ENCODE measurements at regions of chr3 and their contacts with region 1.

Region 1: GRCh38 chr3:15268033-15268631 is 62.1 kb downstream of the CAPN7 start:
- DNase-seq: no peak
- ATAC-seq: peak; percentile 80
- H3K4me3 ChIP-seq: no peak overlapping the region
- H3K27ac ChIP-seq: no peak overlapping the region
- H3K4me1 ChIP-seq: peaks cover 39% of the 10 kb centered on the region
- H3K27me3 ChIP-seq: no peaks in the 10 kb centered on the region
- CTCF ChIP-seq: peak; percentile 95 to 99 (median 97); a peak in 5 of 6 replicates
- EP300 ChIP-seq: no peak
- POLR2A ChIP-seq: no peak
- RAD21 ChIP-seq: peak; percentile 100

Region 2: GRCh38 chr3:15171096-15171495 is 97.0 kb before region 1 on chr3:
- CTCF ChIA-PET with region 1: no interaction called
- POLR2A ChIA-PET with region 1: no interaction called
- RAD21 ChIA-PET with region 1: no interaction called
- SMC1A ChIA-PET with region 1: no interaction called
- in situ Hi-C with region 1: no loop called
- intact Hi-C with region 1: no loop called
- DNase-seq: peak; percentile 40
- ATAC-seq: peak; percentile 97
- H3K4me3 ChIP-seq: no peak overlapping the region
- H3K27ac ChIP-seq: no peak overlapping the region
- H3K4me1 ChIP-seq: peaks cover 3% of the 10 kb centered on the region
- H3K27me3 ChIP-seq: no peaks in the 10 kb centered on the region
- CTCF ChIP-seq: no peak
- EP300 ChIP-seq: no peak; a peak in 1 of 4 replicates
- POLR2A ChIP-seq: no peak
- RAD21 ChIP-seq: no peak

Region 3: DNA sequence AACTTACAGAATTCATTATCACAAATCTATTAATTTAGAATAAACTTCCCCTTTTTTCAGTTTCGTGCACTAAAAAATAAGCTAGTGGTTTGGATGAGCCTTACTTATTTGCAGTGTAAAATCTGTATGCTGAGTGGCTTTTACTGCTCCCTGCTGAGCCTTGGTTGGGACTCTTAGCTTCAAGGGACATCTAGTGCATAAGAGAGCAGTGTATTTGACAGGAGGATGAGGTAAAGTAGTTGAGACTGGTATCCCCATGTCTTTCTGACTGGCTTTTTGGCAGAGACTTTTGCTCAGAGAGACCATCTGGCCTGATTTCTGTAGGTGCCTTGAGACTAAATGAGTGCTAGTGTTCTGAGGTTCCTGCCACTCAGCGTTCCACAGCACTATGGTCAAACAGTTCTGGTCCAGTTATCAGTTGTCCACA is 50.3 kb before region 1 on chr3:
- CTCF ChIA-PET with region 1: interaction called, 11 read pairs
- POLR2A ChIA-PET with region 1: interaction called, 4 read pairs
- RAD21 ChIA-PET with region 1: no interaction called
- SMC1A ChIA-PET with region 1: interaction called, 7 read pairs
- in situ Hi-C with region 1: no loop called
- intact Hi-C with region 1: no loop called
- DNase-seq: no peak
- ATAC-seq: peak; percentile 56
- H3K4me3 ChIP-seq: no peak overlapping the region
- H3K27ac ChIP-seq: no peak overlapping the region
- H3K4me1 ChIP-seq: peaks cover 7% of the 10 kb centered on the region; the same call in 1 of the 2 replicates
- H3K27me3 ChIP-seq: no peaks in the 10 kb centered on the region
- CTCF ChIP-seq: no peak
- EP300 ChIP-seq: no peak
- POLR2A ChIP-seq: no peak
- RAD21 ChIP-seq: no peak

Region 4: DNA sequence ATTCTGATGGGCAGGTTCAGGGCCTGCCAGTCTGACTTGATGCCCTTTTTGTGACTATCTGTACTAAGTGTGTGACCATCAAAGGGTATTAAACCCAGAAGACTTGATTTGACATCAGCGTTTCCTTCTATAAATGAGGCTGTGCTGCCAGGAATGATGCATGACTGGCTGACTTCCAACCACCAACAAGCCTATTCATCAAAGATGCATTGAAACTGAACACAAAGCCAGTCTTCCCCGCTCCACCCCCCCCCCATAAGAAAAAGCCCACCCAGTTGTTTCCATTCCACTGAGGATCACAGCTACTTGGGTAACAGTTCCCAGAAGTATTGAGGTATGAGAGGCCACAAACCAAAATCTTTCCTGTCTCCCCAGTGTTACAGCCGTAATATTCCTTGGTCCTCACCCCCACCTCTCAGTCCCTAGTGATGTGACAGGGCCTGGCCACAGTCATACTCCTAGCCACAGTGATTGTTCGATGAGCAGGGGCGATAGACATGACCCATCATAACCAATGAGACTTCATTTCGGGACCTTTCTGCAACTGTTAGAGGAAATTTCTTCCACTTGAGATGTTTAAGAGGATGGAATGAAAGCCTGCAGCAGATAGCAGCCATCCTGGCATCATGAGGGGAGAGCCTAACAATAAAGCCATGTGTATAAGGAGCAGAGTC is 41.7 kb after region 1 on chr3:
- CTCF ChIA-PET with region 1: interaction called, 7 read pairs
- POLR2A ChIA-PET with region 1: no interaction called
- RAD21 ChIA-PET with region 1: interaction called, 10 read pairs
- SMC1A ChIA-PET with region 1: interaction called, 7 read pairs
- in situ Hi-C with region 1: no loop called
- intact Hi-C with region 1: no loop called
- DNase-seq: no peak
- ATAC-seq: peak; percentile 33
- H3K4me3 ChIP-seq: no peak overlapping the region
- H3K27ac ChIP-seq: peak overlapping the region; percentile 78
- H3K4me1 ChIP-seq: peaks cover 44% of the 10 kb centered on the region
- H3K27me3 ChIP-seq: no peaks in the 10 kb centered on the region
- CTCF ChIP-seq: no peak
- EP300 ChIP-seq: no peak
- POLR2A ChIP-seq: no peak
- RAD21 ChIP-seq: no peak

Region 5: DNA sequence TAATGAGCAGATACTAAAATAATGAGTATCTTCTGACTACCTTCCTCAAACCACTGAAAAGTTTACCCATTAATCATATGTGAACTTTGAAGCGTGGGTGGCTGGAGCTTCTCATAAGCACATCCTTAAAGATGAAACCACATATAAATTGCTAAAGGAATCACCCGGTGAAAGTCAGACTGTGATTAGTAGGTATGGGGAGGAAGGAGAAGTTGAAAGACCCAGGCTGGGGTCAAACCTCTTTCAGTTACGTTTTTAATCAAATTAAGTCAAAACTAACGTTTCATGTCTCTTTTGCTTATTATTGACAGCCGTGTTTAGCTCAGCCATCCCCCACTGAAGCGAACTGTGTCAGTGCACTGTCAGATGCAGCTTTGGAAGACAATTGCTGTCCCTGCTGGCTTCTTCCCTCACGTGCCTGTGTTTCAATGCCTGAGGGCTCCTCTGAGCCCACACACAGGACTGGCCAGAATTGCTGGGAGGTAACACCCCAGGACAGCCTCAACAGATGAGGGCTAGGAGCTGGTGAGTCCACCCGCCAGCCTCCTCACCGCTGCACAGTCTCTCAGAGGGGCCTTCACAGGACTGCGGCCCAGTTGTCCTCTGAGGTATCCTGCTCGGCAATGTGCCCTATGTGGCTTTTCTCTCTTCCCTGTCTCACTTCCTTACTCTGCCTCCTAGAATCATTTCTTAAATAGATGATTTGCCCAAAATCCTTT is 93.5 kb after region 1 on chr3:
- CTCF ChIA-PET with region 1: interaction called, 30 read pairs
- POLR2A ChIA-PET with region 1: interaction called, 5 read pairs
- RAD21 ChIA-PET with region 1: interaction called, 27 read pairs
- SMC1A ChIA-PET with region 1: interaction called, 40 read pairs
- in situ Hi-C with region 1: no loop called
- intact Hi-C with region 1: loop called (anchors 1 kb)
- DNase-seq: peak; percentile 99
- ATAC-seq: peak; percentile 82
- H3K4me3 ChIP-seq: peak overlapping the region; percentile 40; the same call in 1 of the 2 replicates
- H3K27ac ChIP-seq: peak overlapping the region; percentile 84
- H3K4me1 ChIP-seq: peaks cover 47% of the 10 kb centered on the region
- H3K27me3 ChIP-seq: no peaks in the 10 kb centered on the region
- CTCF ChIP-seq: no peak
- EP300 ChIP-seq: peak in 1 of 2 experiments; percentile 98
- POLR2A ChIP-seq: peak; percentile 63
- RAD21 ChIP-seq: peak; percentile 2

Region 6: DNA sequence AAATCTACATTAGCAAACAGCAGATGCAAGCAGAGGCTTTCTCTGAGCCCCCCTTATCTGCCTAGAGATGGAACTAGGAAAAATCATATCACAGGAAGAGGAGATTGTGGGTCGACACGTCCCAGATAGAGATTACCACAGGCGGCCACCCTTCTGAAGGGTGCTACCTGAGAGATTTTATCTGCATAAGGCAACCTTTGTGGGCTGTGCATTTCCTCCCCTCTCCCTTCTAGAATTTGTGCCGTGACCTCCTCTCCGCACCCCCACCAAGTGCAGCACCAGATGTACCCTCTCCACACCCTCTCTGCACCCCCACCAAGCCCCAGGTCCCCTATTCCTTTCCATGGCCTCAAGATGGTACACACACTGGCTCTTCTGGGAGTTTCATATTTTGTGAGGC is 131.8 kb after region 1 on chr3:
- CTCF ChIA-PET with region 1: interaction called, 302 read pairs
- POLR2A ChIA-PET with region 1: interaction called, 10 read pairs
- RAD21 ChIA-PET with region 1: interaction called, 143 read pairs
- SMC1A ChIA-PET with region 1: interaction called, 223 read pairs
- in situ Hi-C with region 1: no loop called
- intact Hi-C with region 1: loop called (anchors 1 kb)
- DNase-seq: no peak
- ATAC-seq: no peak
- H3K4me3 ChIP-seq: no peak overlapping the region
- H3K27ac ChIP-seq: no peak overlapping the region
- H3K4me1 ChIP-seq: peaks cover 10% of the 10 kb centered on the region
- H3K27me3 ChIP-seq: no peaks in the 10 kb centered on the region
- CTCF ChIP-seq: no peak
- EP300 ChIP-seq: no peak
- POLR2A ChIP-seq: no peak
- RAD21 ChIP-seq: no peak

Measured in GM12878 (cell line).